SK-N-SH (cell line): ENCODE measurements at regions of chr2 and their contacts with region 1.

Region 1: GRCh38 chr2:239106314-239106908 is 258.5 kb downstream of the TWIST2 start:
- DNase-seq: peak; percentile 92
- H3K4me3 ChIP-seq: no peak overlapping the region
- H3K27ac ChIP-seq: no peak overlapping the region; a peak in 1 of 4 replicates
- H3K4me1 ChIP-seq: peaks cover 0 to 27% of the 10 kb centered on the region in 2 experiments; a peak in 1 of 4 replicates
- H3K27me3 ChIP-seq: no peaks in the 10 kb centered on the region
- CTCF ChIP-seq: peak; percentile 62
- EP300 ChIP-seq: no peak
- RAD21 ChIP-seq: peak; percentile 96

Region 2: GRCh38 chr2:238784671-238785527 is 321.5 kb before region 1 on chr2:
- CTCF ChIA-PET with region 1: interaction called, 10 read pairs
- POLR2A ChIA-PET with region 1: no interaction called
- DNase-seq: peak; percentile 79
- H3K4me3 ChIP-seq: peak overlapping the region in 1 of 2 experiments; percentile 6; a peak in 1 of 4 replicates
- H3K27ac ChIP-seq: no peak overlapping the region
- H3K4me1 ChIP-seq: no peaks in the 10 kb centered on the region
- H3K27me3 ChIP-seq: no peaks in the 10 kb centered on the region
- CTCF ChIP-seq: peak; percentile 93
- EP300 ChIP-seq: no peak
- RAD21 ChIP-seq: peak; percentile 90

Region 3: DNA sequence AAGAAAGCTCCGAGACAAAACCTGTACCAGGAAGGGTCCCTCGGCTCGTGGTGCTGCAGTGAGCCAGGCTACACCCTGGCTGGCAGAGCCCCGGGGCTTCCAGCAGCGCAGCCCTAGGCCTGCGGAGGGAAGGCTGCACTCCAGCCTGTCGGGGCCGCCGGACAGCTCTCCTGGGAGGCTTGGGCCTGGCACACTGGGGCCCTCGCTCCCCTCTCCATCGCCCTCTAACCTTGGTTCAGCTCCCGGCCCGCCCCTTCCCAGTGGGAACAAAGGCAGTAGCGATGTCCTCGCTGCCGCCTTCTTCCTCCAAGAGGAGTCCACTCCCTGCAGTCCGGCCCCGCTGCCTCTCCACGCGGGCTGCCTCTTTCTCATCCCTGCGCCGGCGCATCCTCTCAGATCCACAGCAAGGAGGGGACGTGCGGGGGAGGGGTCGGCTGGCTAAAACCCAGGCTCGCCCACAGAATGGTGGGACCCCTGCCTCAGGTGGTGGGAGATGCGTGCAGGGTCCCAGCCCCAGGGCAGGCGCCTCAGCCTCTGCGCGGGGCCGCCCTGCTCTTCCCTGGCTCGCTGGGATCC is 120.5 kb before region 1 on chr2:
- CTCF ChIA-PET with region 1: interaction called, 10 read pairs
- POLR2A ChIA-PET with region 1: no interaction called
- DNase-seq: peak; percentile 16
- H3K4me3 ChIP-seq: no peak overlapping the region
- H3K27ac ChIP-seq: no peak overlapping the region
- H3K4me1 ChIP-seq: no peaks in the 10 kb centered on the region
- H3K27me3 ChIP-seq: no peaks in the 10 kb centered on the region
- CTCF ChIP-seq: no peak
- EP300 ChIP-seq: no peak
- RAD21 ChIP-seq: no peak

Region 4: GRCh38 chr2:239035361-239036078 is 70.9 kb before region 1 on chr2:
- CTCF ChIA-PET with region 1: interaction called, 78 read pairs
- POLR2A ChIA-PET with region 1: no interaction called
- DNase-seq: peak; percentile 98
- H3K4me3 ChIP-seq: no peak overlapping the region
- H3K27ac ChIP-seq: no peak overlapping the region; a peak in 1 of 4 replicates
- H3K4me1 ChIP-seq: peaks cover 0 to 14% of the 10 kb centered on the region in 2 experiments; a peak in 1 of 4 replicates
- H3K27me3 ChIP-seq: no peaks in the 10 kb centered on the region
- CTCF ChIP-seq: peak; percentile 60
- EP300 ChIP-seq: no peak
- RAD21 ChIP-seq: peak; percentile 70

Region 5: GRCh38 chr2:239070466-239070865 is 35.9 kb before region 1 on chr2:
- CTCF ChIA-PET with region 1: interaction called, 15 read pairs
- POLR2A ChIA-PET with region 1: no interaction called
- DNase-seq: no peak
- H3K4me3 ChIP-seq: no peak overlapping the region
- H3K27ac ChIP-seq: no peak overlapping the region
- H3K4me1 ChIP-seq: peaks cover 0 to 16% of the 10 kb centered on the region in 2 experiments; a peak in 1 of 4 replicates
- H3K27me3 ChIP-seq: no peaks in the 10 kb centered on the region
- CTCF ChIP-seq: no peak
- EP300 ChIP-seq: no peak
- RAD21 ChIP-seq: no peak

Region 6: GRCh38 chr2:239089884-239090283 is 16.5 kb before region 1 on chr2:
- CTCF ChIA-PET with region 1: interaction called, 101 read pairs
- POLR2A ChIA-PET with region 1: no interaction called
- DNase-seq: no peak
- H3K4me3 ChIP-seq: no peak overlapping the region
- H3K27ac ChIP-seq: no peak overlapping the region
- H3K4me1 ChIP-seq: peaks cover 0 to 38% of the 10 kb centered on the region in 2 experiments; a peak in 1 of 4 replicates
- H3K27me3 ChIP-seq: no peaks in the 10 kb centered on the region
- CTCF ChIP-seq: no peak
- EP300 ChIP-seq: no peak
- RAD21 ChIP-seq: no peak

Region 7: DNA sequence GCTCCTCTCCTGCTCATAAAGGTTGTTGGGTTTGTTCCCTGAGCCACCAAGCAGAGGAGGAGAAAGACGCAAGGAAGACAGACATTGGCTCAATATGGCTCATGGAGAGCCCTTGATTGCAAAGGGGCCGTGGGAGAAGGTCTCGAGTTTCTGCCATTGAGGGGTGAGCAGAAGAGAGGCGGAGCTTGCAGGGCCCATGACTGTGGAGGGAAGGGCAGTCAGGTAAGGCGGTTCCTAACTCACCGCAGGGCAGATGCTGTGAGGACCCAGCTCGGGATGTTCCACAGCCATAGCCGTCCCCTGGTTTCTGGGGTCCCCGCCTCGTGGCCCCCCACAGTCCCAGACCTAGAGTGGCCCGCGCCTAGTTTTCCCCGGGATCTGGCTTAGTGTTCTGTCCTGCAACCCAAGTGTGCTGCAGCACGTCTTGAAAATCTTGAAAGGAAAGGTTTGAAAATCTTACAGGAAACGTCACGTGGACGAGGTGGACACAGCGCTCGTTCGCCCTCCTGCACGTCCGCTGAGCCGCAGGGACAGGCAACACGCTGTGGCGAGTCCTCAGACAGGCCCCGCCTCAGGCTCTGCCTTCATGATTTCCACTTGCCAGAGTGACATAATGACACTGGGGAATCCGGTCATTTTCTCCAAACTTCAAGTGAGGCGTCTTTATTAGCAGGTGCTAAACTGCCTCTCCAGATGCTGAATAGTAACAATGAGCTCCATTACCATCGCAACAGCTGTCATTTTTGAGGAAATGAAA is 399.9 kb after region 1 on chr2:
- CTCF ChIA-PET with region 1: no interaction called
- POLR2A ChIA-PET with region 1: no interaction called
- DNase-seq: no peak
- H3K4me3 ChIP-seq: no peak overlapping the region
- H3K27ac ChIP-seq: no peak overlapping the region
- H3K4me1 ChIP-seq: no peaks in the 10 kb centered on the region
- H3K27me3 ChIP-seq: no peaks in the 10 kb centered on the region
- CTCF ChIP-seq: no peak
- EP300 ChIP-seq: no peak
- RAD21 ChIP-seq: no peak